ENCODE measurements at regions of chr19 and their contacts with region 1.

Region 1: DNA sequence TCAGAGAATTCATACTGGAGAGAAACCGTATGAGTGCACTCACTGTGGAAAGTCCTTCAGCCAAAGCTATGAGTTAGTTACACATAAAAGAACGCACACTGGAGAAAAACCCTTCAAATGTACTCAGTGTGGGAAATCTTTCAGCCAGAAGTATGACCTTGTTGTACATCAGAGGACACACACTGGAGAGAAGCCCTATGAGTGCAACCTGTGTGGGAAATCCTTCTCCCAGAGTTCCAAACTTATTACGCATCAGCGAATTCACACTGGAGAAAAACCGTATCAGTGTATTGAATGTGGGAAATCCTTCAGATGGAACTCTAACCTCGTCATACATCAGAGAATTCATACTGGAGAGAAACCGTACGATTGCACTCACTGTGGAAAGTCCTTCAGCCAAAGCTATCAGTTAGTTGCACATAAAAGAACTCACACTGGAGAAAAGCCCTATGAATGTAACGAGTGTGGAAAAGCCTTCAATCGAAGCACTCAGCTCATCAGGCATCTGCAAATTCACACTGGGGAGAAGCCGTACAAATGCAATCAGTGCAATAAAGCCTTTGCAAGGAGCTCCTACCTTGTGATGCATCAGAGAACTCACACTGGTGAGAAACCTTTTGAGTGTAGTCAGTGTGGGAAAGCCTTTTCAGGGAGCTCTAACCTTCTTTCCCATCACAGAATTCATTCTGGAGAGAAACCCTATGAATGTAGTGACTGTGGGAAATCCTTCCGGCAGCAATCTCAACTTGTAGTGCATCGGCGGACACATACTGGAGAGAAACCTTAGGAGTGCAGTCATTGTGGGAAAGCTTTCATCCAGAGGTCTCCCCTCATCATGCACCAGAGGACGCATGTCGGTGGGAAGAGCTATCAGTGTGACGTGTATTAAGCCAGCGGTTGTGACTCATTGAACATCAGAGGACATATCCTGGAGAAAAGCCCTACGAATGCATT is 16.5 kb upstream of the ZNF8 start:
- DNase-seq: no peak
- H3K4me3 ChIP-seq: peak overlapping the region in 3 of 4 experiments; percentile 10 to 36 (median 19); a peak in 4 of 8 replicates
- H3K27ac ChIP-seq: no peak overlapping the region
- H3K4me1 ChIP-seq: no peaks in the 10 kb centered on the region
- H3K27me3 ChIP-seq: no peaks in the 10 kb centered on the region
- CTCF ChIP-seq: no peak
- EP300 ChIP-seq: no peak
- POLR2A ChIP-seq: peak in 1 of 2 experiments; percentile 45; a peak in 1 of 3 replicates
- RAD21 ChIP-seq: no peak

Region 2: GRCh38 chr19:58091251-58091995 is 170.8 kb before region 1 on chr19:
- CTCF ChIA-PET with region 1: no interaction called
- POLR2A ChIA-PET with region 1: no interaction called
- DNase-seq: no peak
- H3K4me3 ChIP-seq: no peak overlapping the region
- H3K27ac ChIP-seq: no peak overlapping the region
- H3K4me1 ChIP-seq: 0 out of 7 replicates have a peak, but pooled peaks cover 0 to 2% (median 0%) of the 10 kb centered on the region in 4 experiments
- H3K27me3 ChIP-seq: no peaks in the 10 kb centered on the region
- CTCF ChIP-seq: peak in 1 of 3 experiments; percentile 23; a peak in 1 of 4 replicates
- EP300 ChIP-seq: no peak
- POLR2A ChIP-seq: no peak
- RAD21 ChIP-seq: peak; percentile 27 to 31; a peak in 2 of 4 replicates

Region 3: GRCh38 chr19:58252102-58252685 is 10.1 kb before region 1 on chr19:
- CTCF ChIA-PET with region 1: no interaction called
- POLR2A ChIA-PET with region 1: interaction called, 152 read pairs
- DNase-seq: no peak
- H3K4me3 ChIP-seq: peak overlapping the region in 1 of 4 experiments; percentile 10; a peak in 1 of 8 replicates
- H3K27ac ChIP-seq: no peak overlapping the region
- H3K4me1 ChIP-seq: no peaks in the 10 kb centered on the region
- H3K27me3 ChIP-seq: no peaks in the 10 kb centered on the region
- CTCF ChIP-seq: no peak
- EP300 ChIP-seq: no peak
- POLR2A ChIP-seq: no peak
- RAD21 ChIP-seq: no peak

Region 4: DNA sequence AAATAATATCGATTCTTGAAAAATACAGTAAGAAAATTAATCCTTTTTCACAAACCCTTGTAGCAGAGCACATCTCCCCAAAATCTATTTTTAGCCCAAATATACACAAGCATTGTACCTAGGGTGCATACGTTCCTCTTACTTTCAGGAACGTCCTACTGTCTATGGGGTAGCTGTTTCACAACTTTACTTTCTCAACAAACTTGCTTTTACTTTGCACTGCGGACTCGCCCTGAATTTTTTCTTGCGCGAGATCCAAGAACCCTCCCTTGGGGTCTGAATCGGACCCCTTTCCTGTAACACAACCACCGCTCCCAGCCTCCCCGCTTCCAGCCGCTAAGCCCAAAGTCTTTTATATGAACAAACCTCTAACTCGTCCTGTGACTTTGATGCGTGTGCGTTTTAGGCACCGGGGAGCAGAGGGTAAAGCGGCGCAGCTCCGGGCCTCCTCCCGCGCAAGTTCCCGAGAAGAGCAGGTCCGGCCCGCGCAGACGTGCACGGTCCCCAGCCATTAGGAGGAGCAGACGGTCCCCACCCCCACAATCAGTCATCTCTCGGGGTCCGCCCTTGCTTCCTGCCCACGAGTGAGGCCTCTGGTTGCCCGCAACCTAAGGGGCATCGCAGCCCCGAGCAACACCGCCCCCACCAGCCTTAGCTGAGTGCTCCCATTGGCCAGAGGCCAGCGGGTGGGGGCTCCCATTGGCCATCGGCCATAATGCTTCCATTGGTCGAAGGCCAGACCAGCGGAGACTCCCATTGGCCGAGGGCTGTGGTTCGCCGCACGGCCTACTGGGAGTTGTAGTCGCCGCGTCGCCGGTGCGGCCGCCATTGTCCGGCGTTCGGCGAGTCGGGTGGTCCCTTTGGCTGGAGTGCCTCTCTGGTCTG is 16.2 kb after region 1 on chr19 and contains the start of gene ZNF8:
- CTCF ChIA-PET with region 1: interaction called, 4 read pairs
- POLR2A ChIA-PET with region 1: interaction called, 83 read pairs
- DNase-seq: peak; percentile 96 to 97
- H3K4me3 ChIP-seq: peak within 1 kb of the TSS; percentile 86 to 97 (median 94)
- H3K27ac ChIP-seq: peak within 1 kb of the TSS; percentile 83
- H3K4me1 ChIP-seq: peaks cover 4 to 11% (median 6%) of the 10 kb centered on the region in 4 experiments; a peak in 6 of 7 replicates
- H3K27me3 ChIP-seq: no peaks in the 10 kb centered on the region
- CTCF ChIP-seq: no peak
- EP300 ChIP-seq: no peak
- POLR2A ChIP-seq: peak; percentile 81 to 92
- RAD21 ChIP-seq: no peak
- total RNA-seq, gene ZNF8: 20.5 and 21.5 TPM in 2 replicates

Region 5: DNA sequence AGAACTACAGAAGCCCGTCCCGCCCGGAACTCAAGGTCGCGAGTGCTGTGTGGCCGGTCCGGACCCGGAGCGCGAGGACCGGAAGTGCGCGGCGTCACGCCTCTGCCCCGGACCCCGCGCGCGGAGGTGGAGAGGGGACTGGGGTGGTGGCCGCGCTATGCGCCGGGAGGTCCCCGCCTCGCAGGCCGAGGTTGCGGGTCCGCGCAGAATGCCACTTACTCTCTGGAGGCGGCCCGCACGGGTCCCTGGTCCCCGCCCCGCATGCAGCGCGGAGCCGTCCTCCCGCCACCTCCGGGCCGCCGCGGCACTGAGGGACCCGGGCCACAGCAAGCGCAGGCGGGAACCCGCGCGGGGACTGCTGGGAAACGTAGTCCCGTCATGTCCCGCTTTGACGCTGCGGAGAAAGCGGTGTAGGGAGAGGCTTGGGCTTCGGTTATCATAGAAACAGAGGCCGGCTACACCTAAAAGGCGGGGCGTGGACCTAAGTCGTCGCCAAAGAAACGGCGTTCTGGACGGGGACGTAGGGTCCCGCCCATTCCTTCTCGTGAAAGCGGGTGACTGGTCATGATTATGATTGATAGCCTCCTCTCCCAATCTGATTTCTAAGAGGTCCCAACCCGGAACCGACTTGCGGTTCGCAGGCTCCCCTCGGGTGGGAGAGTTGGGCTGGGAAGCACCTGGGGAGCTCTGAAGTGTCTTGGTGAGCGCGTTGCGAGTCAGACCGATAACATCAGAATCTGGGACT is 118.6 kb after region 1 on chr19 and contains the start of gene ZNF837:
- CTCF ChIA-PET with region 1: no interaction called
- POLR2A ChIA-PET with region 1: no interaction called
- DNase-seq: peak; percentile 96 to 100
- H3K4me3 ChIP-seq: peak within 1 kb of the TSS; percentile 56 to 77 (median 64)
- H3K27ac ChIP-seq: peak within 1 kb of the TSS; percentile 72; the same call in 1 of the 2 replicates
- H3K4me1 ChIP-seq: peaks cover 0 to 11% (median 8%) of the 10 kb centered on the region in 4 experiments; a peak in 6 of 7 replicates
- H3K27me3 ChIP-seq: no peaks in the 10 kb centered on the region
- CTCF ChIP-seq: no peak
- EP300 ChIP-seq: no peak
- POLR2A ChIP-seq: peak; percentile 89 to 92
- RAD21 ChIP-seq: no peak; a peak in 1 of 4 replicates
- total RNA-seq, gene ZNF837: 1.9 and 2.7 TPM in 2 replicates